ENCODE measurements at regions of chr11 and their contacts with region 1.

Region 1: DNA sequence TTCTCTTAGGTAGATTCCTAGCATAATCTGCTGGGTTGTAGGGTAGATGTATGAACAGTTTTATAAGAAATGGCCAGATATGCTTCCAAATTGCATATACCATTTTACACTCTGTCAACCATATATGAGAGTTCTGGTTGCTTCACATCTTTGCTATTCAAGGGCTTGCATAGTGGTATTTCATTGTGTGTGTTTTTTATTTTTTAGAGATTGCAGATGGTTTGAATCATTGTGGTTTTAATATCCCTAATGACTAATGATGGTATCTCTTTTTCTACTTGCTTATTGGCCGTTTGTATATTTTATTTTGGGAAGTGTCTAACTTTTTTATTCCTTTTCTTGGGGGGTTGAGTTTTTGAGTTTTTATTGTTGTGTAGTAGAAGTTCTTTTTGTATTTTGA is 26.9 kb downstream of the RNF214 start:
- DNase-seq: no peak
- H3K4me3 ChIP-seq: no peak overlapping the region
- H3K4me3 Mint-ChIP-seq: no peak overlapping the region
- H3K27ac ChIP-seq: no peak overlapping the region
- H3K27ac Mint-ChIP-seq: peak overlapping the region in 2 of 7 donors; percentile 22 to 30
- H3K4me1 ChIP-seq: no peaks in the 10 kb centered on the region
- H3K4me1 Mint-ChIP-seq: peaks cover 0 to 4% (median under 1%) of the 10 kb centered on the region in 4 donors
- H3K27me3 ChIP-seq: no peaks in the 10 kb centered on the region
- H3K27me3 Mint-ChIP-seq: no peaks in the 10 kb centered on the region

Region 2: GRCh38 chr11:117273550-117274289 is 14.3 kb after region 1 on chr11:
- CTCF ChIA-PET with region 1: no interaction called
- POLR2A ChIA-PET with region 1: no interaction called
- intact Hi-C with region 1: loop called (anchors 1 kb)
- DNase-seq: no peak
- H3K4me3 ChIP-seq: no peak overlapping the region
- H3K4me3 Mint-ChIP-seq: peak overlapping the region in 7 of 8 donors; percentile 12 to 61 (median 34)
- H3K27ac ChIP-seq: no peak overlapping the region
- H3K27ac Mint-ChIP-seq: peak overlapping the region; percentile 54 to 88 (median 72)
- H3K4me1 ChIP-seq: peaks cover 37% of the 10 kb centered on the region
- H3K4me1 Mint-ChIP-seq: peaks cover 27 to 49% (median 40%) of the 10 kb centered on the region in 4 donors
- H3K27me3 ChIP-seq: no peaks in the 10 kb centered on the region
- H3K27me3 Mint-ChIP-seq: no peaks in the 10 kb centered on the region

Measured in CD4-positive, alpha-beta memory T cell (primary cell).